ENCODE measurements at regions of chr9 and their contacts with region 1.

Region 1: GRCh38 chr9:111559000-111559610 is 34.1 kb downstream of the ZNF483 start:
- DNase-seq: no peak
- ATAC-seq: no peak
- H3K4me3 ChIP-seq: no peak overlapping the region
- H3K27ac ChIP-seq: no peak overlapping the region
- H3K4me1 ChIP-seq: no peaks in the 10 kb centered on the region
- H3K27me3 ChIP-seq: no peaks in the 10 kb centered on the region
- CTCF ChIP-seq: no peak

Region 2: GRCh38 chr9:111136180-111136579 is 422.9 kb before region 1 on chr9:
- intact Hi-C with region 1: no loop called
- DNase-seq: no peak
- ATAC-seq: no peak
- H3K4me3 ChIP-seq: no peak overlapping the region
- H3K27ac ChIP-seq: no peak overlapping the region
- H3K4me1 ChIP-seq: no peaks in the 10 kb centered on the region
- H3K27me3 ChIP-seq: no peaks in the 10 kb centered on the region
- CTCF ChIP-seq: no peak

Region 3: DNA sequence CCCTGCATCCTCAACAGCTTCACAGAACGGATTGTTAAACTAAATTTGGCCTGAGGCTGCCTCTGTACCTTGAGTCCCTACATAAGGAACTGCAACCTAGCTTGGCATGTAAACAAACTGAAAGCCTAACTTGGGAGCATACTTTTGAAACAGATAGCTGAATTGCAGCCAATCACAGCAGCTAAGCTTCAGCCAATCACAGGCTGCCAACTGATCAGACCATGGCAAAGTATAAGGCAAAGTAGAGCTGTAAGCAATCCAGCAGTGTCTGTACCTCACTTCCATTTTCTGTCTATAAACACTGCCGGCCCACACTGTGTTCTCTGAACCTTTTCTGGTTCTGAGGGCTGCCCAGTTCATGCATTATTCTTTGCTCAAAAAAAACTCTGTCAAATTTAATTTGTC is 43.0 kb before region 1 on chr9:
- intact Hi-C with region 1: loop called in 1 of 2 experiments (anchors 5 kb)
- DNase-seq: no peak
- ATAC-seq: no peak
- H3K4me3 ChIP-seq: no peak overlapping the region
- H3K27ac ChIP-seq: no peak overlapping the region
- H3K4me1 ChIP-seq: no peaks in the 10 kb centered on the region
- H3K27me3 ChIP-seq: no peaks in the 10 kb centered on the region
- CTCF ChIP-seq: no peak